Cardiac septum (tissue), 1 donor: ENCODE measurements at regions of chr19 and their contacts with region 1.

Region 1: DNA sequence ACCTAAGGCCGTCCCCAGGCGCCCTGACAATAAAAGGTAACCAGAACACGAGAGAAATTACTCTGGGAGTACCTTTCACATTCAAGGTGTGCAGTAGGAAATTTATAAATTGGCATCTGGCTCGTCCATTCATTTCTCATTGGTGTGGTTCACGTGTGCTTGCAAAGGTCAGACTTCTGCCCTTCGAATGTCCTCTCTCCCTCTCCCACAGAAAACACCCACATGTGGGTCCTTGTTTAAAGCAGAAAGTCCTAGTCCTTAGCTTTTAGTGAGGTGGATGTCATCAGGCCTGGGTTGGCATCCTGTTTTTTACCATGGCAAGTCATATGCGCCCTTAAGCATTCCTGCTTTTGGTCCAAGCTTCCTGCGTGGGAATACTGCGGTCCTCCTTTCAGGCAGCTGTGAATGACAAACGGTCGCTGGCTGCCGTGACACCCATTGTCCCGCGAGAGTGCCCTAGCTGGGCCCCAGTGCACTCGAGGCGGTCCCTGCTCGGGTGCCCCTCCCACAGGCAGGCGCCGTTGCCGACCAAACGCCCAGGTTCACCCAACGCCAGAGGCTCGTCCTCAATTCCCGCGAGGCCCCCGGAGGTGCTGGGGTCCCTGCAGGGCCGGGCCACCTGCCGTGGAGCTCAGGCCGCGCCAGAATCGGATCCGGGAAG is at the start of gene NUDT19:
- DNase-seq: peak; percentile 89
- total RNA-seq, gene NUDT19: 15.3 TPM

Region 2: GRCh38 chr19:32652894-32653602 is 38.4 kb before region 1 on chr19:
- intact Hi-C with region 1: no loop called
- DNase-seq: peak; percentile 82

Region 3: GRCh38 chr19:32674959-32675719 is 16.3 kb before region 1 on chr19 and contains the start of gene ANKRD27:
- intact Hi-C with region 1: loop called (anchors 2 kb)
- DNase-seq: peak; percentile 99
- total RNA-seq, gene ANKRD27: 24.7 TPM